ENCODE measurements at regions of chr19 and their contacts with region 1.

Region 1: DNA sequence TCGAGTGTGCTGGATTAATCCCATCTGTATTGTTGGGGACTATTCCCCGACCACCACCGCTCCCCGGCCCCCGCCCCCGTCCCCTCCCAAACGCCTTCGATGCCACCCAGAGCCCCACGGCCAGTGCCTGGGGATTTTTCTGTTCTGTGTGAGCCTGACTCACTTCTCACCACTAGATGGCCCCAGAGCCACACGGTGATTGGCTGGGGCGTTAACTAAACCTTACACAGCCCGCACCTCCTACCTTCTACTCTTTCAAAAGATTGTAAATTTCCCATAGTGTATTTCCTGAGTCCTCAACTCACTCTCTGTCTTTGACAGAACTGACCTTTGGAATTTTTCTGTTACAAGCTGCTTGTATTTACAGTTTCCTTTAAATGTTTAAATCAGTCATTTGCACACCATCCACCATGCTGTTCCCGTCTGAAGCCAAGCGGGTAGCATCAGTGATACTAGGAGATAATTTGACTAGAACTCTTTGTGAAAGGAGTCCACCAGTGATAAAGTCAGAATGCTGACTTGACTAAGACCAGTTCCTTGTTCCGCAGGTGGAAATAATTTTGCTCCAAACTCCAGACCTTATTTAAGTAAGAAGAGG is 61.4 kb downstream of the RFX2 start:
- DNase-seq: peak in 1 of 2 experiments; percentile 80
- H3K4me3 ChIP-seq: no peak overlapping the region; a peak in 1 of 8 replicates
- H3K27ac ChIP-seq: no peak overlapping the region
- H3K4me1 ChIP-seq: no peaks in the 10 kb centered on the region
- H3K27me3 ChIP-seq: no peaks in the 10 kb centered on the region; a peak in 1 of 7 replicates
- CTCF ChIP-seq: peak; percentile 77 to 95 (median 84)
- EP300 ChIP-seq: no peak
- POLR2A ChIP-seq: no peak
- RAD21 ChIP-seq: peak; percentile 94 to 95

Region 2: GRCh38 chr19:5987077-5987818 is 61.7 kb before region 1 on chr19:
- CTCF ChIA-PET with region 1: interaction called, 13 read pairs
- POLR2A ChIA-PET with region 1: no interaction called
- DNase-seq: peak; percentile 41 to 87
- H3K4me3 ChIP-seq: no peak overlapping the region
- H3K27ac ChIP-seq: no peak overlapping the region
- H3K4me1 ChIP-seq: peaks cover 0 to 5% (median 0%) of the 10 kb centered on the region in 4 experiments; a peak in 4 of 7 replicates
- H3K27me3 ChIP-seq: peaks cover 0 to 3% (median 0%) of the 10 kb centered on the region in 4 experiments; a peak in 3 of 7 replicates
- CTCF ChIP-seq: peak; percentile 55 to 88 (median 88)
- EP300 ChIP-seq: no peak
- POLR2A ChIP-seq: no peak
- RAD21 ChIP-seq: peak; percentile 88 to 90

Region 3: GRCh38 chr19:6032827-6033226 is 16.1 kb before region 1 on chr19:
- CTCF ChIA-PET with region 1: interaction called, 16 read pairs
- POLR2A ChIA-PET with region 1: no interaction called
- DNase-seq: peak in 1 of 2 experiments; percentile 16
- H3K4me3 ChIP-seq: no peak overlapping the region
- H3K27ac ChIP-seq: no peak overlapping the region
- H3K4me1 ChIP-seq: no peaks in the 10 kb centered on the region
- H3K27me3 ChIP-seq: no peaks in the 10 kb centered on the region
- CTCF ChIP-seq: no peak
- EP300 ChIP-seq: no peak
- POLR2A ChIP-seq: no peak
- RAD21 ChIP-seq: no peak

Region 4: GRCh38 chr19:6060600-6061375 is 11.9 kb after region 1 on chr19:
- CTCF ChIA-PET with region 1: interaction called, 17 read pairs
- POLR2A ChIA-PET with region 1: no interaction called
- DNase-seq: no peak
- H3K4me3 ChIP-seq: no peak overlapping the region
- H3K27ac ChIP-seq: no peak overlapping the region
- H3K4me1 ChIP-seq: peaks cover 0 to 3% (median 0%) of the 10 kb centered on the region in 4 experiments; a peak in 1 of 7 replicates
- H3K27me3 ChIP-seq: 0 out of 7 replicates have a peak, but pooled peaks cover 0 to 2% (median 0%) of the 10 kb centered on the region in 4 experiments
- CTCF ChIP-seq: no peak
- EP300 ChIP-seq: no peak
- POLR2A ChIP-seq: no peak
- RAD21 ChIP-seq: no peak

Region 5: DNA sequence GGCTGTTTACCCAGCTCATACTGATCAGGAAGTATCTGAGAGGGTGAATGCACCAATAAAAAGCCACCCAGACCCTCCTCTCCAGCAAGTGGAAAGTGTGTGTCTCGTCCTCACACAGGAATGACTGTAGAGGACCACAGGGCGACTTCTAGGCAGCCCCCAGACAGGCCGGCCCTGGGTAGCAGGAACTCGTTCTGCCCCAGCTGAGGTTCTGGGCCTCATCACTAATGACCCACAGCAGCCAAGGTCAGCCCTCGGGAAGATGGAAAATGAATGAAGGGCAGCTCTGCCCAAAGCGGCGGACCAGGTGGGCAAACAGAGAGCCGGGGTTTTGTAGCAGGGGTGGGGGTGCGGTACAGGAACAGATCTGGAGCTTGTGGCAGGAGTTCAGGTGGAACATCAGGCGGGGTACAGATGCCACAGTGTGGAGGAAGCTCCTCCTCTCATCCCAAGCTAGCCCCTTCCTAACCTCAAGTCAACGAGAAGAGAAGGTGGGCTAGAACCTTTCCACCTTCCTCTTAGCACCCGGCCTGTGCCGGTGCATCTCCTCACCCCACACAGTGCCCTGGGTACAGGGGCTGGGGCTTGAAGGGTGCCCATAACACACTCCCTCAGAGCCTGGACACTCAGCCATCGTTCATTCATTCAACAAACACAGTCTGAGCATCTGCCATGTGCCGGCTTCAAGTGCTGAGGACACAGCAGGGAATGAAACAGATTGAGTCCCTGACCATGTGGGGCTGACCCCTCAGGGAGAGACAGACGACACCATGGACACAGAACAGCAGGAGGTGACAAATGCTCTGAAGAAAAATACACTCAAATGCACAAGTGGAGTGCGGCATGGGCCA is 25.2 kb after region 1 on chr19:
- CTCF ChIA-PET with region 1: interaction called, 17 read pairs
- POLR2A ChIA-PET with region 1: no interaction called
- DNase-seq: no peak
- H3K4me3 ChIP-seq: no peak overlapping the region
- H3K27ac ChIP-seq: no peak overlapping the region
- H3K4me1 ChIP-seq: no peaks in the 10 kb centered on the region; a peak in 1 of 7 replicates
- H3K27me3 ChIP-seq: no peaks in the 10 kb centered on the region
- CTCF ChIP-seq: no peak
- EP300 ChIP-seq: no peak
- POLR2A ChIP-seq: no peak
- RAD21 ChIP-seq: no peak

Region 6: GRCh38 chr19:6098574-6098973 is 49.7 kb after region 1 on chr19:
- CTCF ChIA-PET with region 1: interaction called, 13 read pairs
- POLR2A ChIA-PET with region 1: no interaction called
- DNase-seq: no peak
- H3K4me3 ChIP-seq: no peak overlapping the region
- H3K27ac ChIP-seq: no peak overlapping the region
- H3K4me1 ChIP-seq: no peaks in the 10 kb centered on the region; a peak in 1 of 7 replicates
- H3K27me3 ChIP-seq: peaks cover 0 to 2% (median under 1%) of the 10 kb centered on the region in 4 experiments; a peak in 2 of 7 replicates
- CTCF ChIP-seq: no peak
- EP300 ChIP-seq: no peak
- POLR2A ChIP-seq: no peak
- RAD21 ChIP-seq: no peak

Region 7: GRCh38 chr19:6116749-6117430 is 68.0 kb after region 1 on chr19:
- CTCF ChIA-PET with region 1: interaction called, 25 read pairs
- POLR2A ChIA-PET with region 1: interaction called, 3 read pairs
- DNase-seq: no peak
- H3K4me3 ChIP-seq: no peak overlapping the region
- H3K27ac ChIP-seq: no peak overlapping the region
- H3K4me1 ChIP-seq: no peaks in the 10 kb centered on the region; a peak in 1 of 7 replicates
- H3K27me3 ChIP-seq: peaks cover 0 to 2% (median 0%) of the 10 kb centered on the region in 4 experiments; a peak in 1 of 7 replicates
- CTCF ChIP-seq: no peak
- EP300 ChIP-seq: no peak
- POLR2A ChIP-seq: no peak
- RAD21 ChIP-seq: no peak

Region 8: DNA sequence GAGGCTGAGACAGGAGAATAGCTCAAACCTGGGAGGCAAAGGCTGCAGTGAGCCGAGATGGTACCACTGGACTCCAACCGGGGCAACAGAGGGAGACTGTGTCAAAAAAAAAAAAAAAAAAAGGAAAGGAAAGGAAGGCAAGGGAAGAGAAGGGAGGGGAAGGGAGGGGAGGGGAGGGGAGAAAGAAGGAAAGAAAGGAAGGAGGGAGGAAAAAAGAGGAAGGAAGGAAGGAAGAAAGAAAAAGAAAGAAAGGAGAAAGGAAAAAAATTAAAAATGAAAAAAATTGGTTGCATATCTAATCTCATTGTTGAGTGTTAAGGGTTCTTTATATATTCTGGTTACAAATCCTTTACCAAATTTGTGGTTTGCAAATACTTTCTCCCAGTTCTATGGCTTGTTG is 132.2 kb after region 1 on chr19:
- CTCF ChIA-PET with region 1: no interaction called
- POLR2A ChIA-PET with region 1: no interaction called
- DNase-seq: no peak
- H3K4me3 ChIP-seq: no peak overlapping the region
- H3K27ac ChIP-seq: no peak overlapping the region
- H3K4me1 ChIP-seq: no peaks in the 10 kb centered on the region
- H3K27me3 ChIP-seq: no peaks in the 10 kb centered on the region
- CTCF ChIP-seq: no peak
- EP300 ChIP-seq: no peak
- POLR2A ChIP-seq: no peak
- RAD21 ChIP-seq: no peak

Region 9: DNA sequence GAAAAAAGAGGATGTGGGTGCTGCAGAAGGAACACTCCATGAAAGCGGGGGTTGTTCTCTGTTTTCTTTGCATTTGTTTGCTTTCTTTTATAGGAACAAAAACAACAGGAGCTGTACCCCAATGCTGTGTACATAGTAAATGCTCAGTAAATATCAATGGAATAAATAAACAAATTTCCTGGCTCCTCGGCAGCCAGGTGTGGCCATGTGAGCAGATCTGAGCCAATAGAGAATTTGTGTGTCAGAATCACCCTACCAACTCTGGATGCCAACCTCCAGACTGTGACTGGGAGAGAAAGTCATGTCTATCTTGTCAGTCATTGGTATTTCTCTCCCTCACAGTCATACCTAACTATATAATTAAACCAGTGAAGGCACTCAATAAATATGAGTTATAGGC is 301.8 kb after region 1 on chr19:
- CTCF ChIA-PET with region 1: no interaction called
- POLR2A ChIA-PET with region 1: no interaction called
- DNase-seq: no peak
- H3K4me3 ChIP-seq: no peak overlapping the region
- H3K27ac ChIP-seq: no peak overlapping the region
- H3K4me1 ChIP-seq: no peaks in the 10 kb centered on the region
- H3K27me3 ChIP-seq: no peaks in the 10 kb centered on the region
- CTCF ChIP-seq: no peak
- EP300 ChIP-seq: no peak
- POLR2A ChIP-seq: no peak
- RAD21 ChIP-seq: no peak

Measured in H1 (cell line).